CD8-positive, alpha-beta T cell (primary cell): ENCODE measurements at regions of chr5 and their contacts with region 1.

Region 1: GRCh38 chr5:65481635-65482295 is at the start of gene ADAMTS6:
- DNase-seq: peak; percentile 47 to 91 (median 80)
- ATAC-seq: peak; percentile 90
- H3K4me3 ChIP-seq: peak within 1 kb of the TSS; percentile 71 to 80
- H3K4me3 Mint-ChIP-seq: peak within 1 kb of the TSS; percentile 88
- H3K27ac ChIP-seq: peak within 1 kb of the TSS; percentile 64 to 74
- H3K27ac Mint-ChIP-seq: peak within 1 kb of the TSS; percentile 94
- H3K4me1 ChIP-seq: peaks cover 11% of the 10 kb centered on the region
- H3K4me1 Mint-ChIP-seq: peaks cover 16% of the 10 kb centered on the region
- H3K27me3 ChIP-seq: no peaks in the 10 kb centered on the region
- H3K27me3 Mint-ChIP-seq: no peaks in the 10 kb centered on the region
- CTCF ChIP-seq: no peak
- total RNA-seq, gene ADAMTS6: 4.0 to 4.3 TPM

Region 2: DNA sequence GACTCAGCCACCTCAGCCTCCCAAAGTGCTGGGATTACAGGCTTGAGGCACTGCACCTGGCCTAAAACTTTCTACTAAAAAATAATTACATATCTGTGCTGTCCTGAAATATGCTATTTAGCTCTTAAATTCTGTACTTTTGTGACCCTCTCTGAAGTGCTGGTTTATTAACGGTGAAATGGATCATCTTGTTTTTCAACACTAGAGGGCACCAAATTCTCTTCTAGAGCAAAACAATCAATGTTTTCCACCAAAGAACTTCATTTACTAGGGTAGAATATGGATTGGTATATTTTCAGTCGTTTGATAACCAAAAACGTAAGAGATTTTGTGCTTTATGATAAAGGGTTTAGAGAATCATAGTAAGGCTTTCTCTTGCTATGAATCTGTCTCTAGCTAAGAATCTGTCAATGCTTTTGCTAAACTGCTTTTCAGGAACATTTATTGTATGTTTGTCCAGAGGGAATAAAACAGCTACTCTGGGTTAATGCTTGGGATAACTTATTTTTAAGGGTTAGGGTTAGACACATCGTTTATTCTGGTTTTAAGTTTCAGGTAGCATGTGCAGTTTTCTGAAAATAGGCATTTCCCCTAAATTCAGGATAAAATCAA is 1252.5 kb before region 1 on chr5:
- CTCF ChIA-PET with region 1: no interaction called
- POLR2A ChIA-PET with region 1: no interaction called
- intact Hi-C with region 1: loop called in 1 of 2 experiments (anchors 5 kb)
- DNase-seq: peak in 1 of 9 experiments; percentile 9
- ATAC-seq: no peak
- H3K4me3 ChIP-seq: no peak overlapping the region
- H3K4me3 Mint-ChIP-seq: no peak overlapping the region
- H3K27ac ChIP-seq: no peak overlapping the region
- H3K27ac Mint-ChIP-seq: no peak overlapping the region
- H3K4me1 ChIP-seq: no peaks in the 10 kb centered on the region
- H3K4me1 Mint-ChIP-seq: no peaks in the 10 kb centered on the region
- H3K27me3 ChIP-seq: no peaks in the 10 kb centered on the region
- H3K27me3 Mint-ChIP-seq: no peaks in the 10 kb centered on the region
- CTCF ChIP-seq: peak; percentile 38

Region 3: DNA sequence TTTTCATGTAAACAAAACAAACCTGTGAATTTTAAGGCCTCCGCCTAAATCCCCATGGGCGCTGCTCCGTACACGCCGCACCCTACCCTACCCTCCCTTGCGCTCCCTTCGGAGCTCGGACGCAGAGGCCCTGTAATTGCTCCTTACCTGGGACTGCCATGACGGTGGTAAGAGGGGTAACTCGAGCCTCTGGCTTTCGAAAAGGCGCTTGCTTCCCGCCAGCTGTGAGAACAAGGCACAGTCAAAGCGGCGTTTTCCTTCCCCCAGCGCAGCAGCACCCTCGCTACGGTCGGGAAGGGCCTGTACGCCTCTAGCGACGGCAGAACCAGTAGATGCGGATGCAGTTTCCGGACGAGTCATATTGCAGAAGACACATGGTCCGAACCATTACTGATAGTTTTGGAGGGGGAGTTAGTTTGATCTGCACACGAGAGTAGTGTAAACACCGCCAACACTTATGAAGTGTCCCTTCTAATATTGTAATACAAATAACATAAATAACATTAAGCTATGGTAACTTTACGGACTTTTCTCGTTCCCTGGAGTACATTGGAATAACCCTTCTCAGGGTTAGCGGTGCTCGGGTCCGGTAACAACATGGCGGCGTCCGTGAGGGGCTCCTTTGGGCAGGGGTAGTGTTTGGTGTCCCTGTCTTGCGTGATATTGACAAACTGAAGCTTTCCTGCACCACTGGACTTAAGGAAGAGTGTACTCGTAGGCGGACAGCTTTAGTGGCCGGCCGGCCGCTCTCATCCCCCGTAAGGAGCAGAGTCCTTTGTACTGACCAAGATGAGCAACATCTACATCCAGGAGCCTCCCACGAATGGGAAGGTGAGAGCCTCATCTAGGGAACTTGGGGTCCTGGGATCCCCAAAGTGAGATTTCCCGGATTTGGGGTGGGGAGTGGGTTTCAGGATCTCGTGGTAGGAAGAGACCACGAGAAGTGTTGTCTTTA is 713.1 kb before region 1 on chr5 and contains the starts of genes CWC27 and SREK1IP1:
- CTCF ChIA-PET with region 1: no interaction called
- POLR2A ChIA-PET with region 1: no interaction called
- intact Hi-C with region 1: loop called in 1 of 2 experiments (anchors 1 kb)
- DNase-seq: peak; percentile 63 to 92 (median 80)
- ATAC-seq: peak; percentile 96
- H3K4me3 ChIP-seq: peak within 1 kb of the TSS; percentile 78 to 93
- H3K4me3 Mint-ChIP-seq: peak within 1 kb of the TSS; percentile 100
- H3K27ac ChIP-seq: peak within 1 kb of the TSS; percentile 85 to 90
- H3K27ac Mint-ChIP-seq: peak within 1 kb of the TSS; percentile 97
- H3K4me1 ChIP-seq: peaks cover 39% of the 10 kb centered on the region
- H3K4me1 Mint-ChIP-seq: peaks cover 66% of the 10 kb centered on the region
- H3K27me3 ChIP-seq: no peaks in the 10 kb centered on the region
- H3K27me3 Mint-ChIP-seq: no peaks in the 10 kb centered on the region
- CTCF ChIP-seq: no peak
- total RNA-seq, gene CWC27: 15.5 to 16.6 TPM
- total RNA-seq, gene SREK1IP1: 20.4 to 26.5 TPM

Region 4: GRCh38 chr5:64811050-64811640 is 670.6 kb before region 1 on chr5:
- CTCF ChIA-PET with region 1: interaction called, 29 read pairs
- POLR2A ChIA-PET with region 1: no interaction called
- intact Hi-C with region 1: loop called (anchors 1 kb)
- DNase-seq: peak in 3 of 9 experiments; percentile 4 to 63 (median 52)
- ATAC-seq: no peak
- H3K4me3 ChIP-seq: no peak overlapping the region
- H3K4me3 Mint-ChIP-seq: no peak overlapping the region
- H3K27ac ChIP-seq: no peak overlapping the region
- H3K27ac Mint-ChIP-seq: no peak overlapping the region
- H3K4me1 ChIP-seq: no peaks in the 10 kb centered on the region
- H3K4me1 Mint-ChIP-seq: no peaks in the 10 kb centered on the region
- H3K27me3 ChIP-seq: no peaks in the 10 kb centered on the region
- H3K27me3 Mint-ChIP-seq: no peaks in the 10 kb centered on the region
- CTCF ChIP-seq: peak; percentile 65

Region 5: GRCh38 chr5:65035211-65036206 is 446.3 kb before region 1 on chr5:
- CTCF ChIA-PET with region 1: no interaction called
- POLR2A ChIA-PET with region 1: interaction called, 7 read pairs
- intact Hi-C with region 1: loop called (anchors 1 to 2 kb)
- DNase-seq: peak; percentile 62 to 95 (median 83)
- ATAC-seq: peak; percentile 76
- H3K4me3 ChIP-seq: peak overlapping the region; percentile 57 to 60
- H3K4me3 Mint-ChIP-seq: peak overlapping the region; percentile 95
- H3K27ac ChIP-seq: peak overlapping the region; percentile 83 to 96
- H3K27ac Mint-ChIP-seq: peak overlapping the region; percentile 89
- H3K4me1 ChIP-seq: peaks cover 20% of the 10 kb centered on the region
- H3K4me1 Mint-ChIP-seq: peaks cover 32% of the 10 kb centered on the region
- H3K27me3 ChIP-seq: no peaks in the 10 kb centered on the region
- H3K27me3 Mint-ChIP-seq: no peaks in the 10 kb centered on the region
- CTCF ChIP-seq: no peak

Region 6: DNA sequence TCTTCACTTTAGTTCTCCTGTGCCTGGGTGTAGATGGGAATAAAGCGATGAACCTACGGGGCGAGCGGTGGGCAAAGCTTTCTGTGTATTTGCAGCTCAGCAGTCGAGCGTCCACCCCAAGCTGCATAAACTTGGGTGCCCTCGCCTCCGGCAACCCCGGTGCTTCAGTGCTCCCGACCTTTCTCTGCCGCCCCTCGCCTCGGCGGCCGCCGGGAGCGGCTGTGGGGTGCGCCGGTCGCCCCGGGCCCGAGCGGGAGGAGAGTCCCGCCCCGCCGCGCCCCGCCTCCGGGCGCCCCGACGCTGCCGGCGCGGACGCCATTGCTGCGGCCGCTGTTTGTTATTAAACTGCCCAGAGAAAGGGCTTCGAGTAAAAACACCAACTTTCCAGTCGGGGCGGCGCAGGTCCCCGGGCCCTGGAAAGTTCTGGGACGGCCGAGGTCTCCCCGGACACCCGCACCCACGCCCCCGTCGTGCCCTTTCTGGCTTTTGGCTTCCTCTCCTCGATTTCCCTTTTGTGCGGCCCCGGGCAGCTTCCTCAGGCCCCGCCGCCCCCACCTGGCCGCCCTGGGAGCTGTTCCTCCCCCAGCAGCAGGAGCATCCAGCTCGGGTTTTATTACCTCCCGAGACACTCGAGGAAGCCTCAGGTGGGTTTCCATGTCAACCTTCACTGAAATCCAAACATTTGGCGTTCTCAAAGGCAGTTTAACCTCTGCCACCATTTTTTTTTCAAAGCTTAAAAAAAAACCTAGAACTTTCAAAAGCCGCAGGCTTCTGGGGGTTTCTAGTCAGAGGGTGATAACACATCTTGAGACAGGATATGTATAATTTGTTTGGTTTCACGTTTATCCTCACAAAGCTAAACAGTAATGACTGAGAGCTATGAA is 378.7 kb before region 1 on chr5:
- CTCF ChIA-PET with region 1: interaction called, 12 read pairs
- POLR2A ChIA-PET with region 1: interaction called, 9 read pairs
- intact Hi-C with region 1: loop called (anchors 1 to 2 kb)
- DNase-seq: peak; percentile 26 to 85 (median 59)
- ATAC-seq: peak; percentile 75
- H3K4me3 ChIP-seq: peak overlapping the region; percentile 64 to 78
- H3K4me3 Mint-ChIP-seq: peak overlapping the region; percentile 88
- H3K27ac ChIP-seq: peak overlapping the region; percentile 77 to 83
- H3K27ac Mint-ChIP-seq: peak overlapping the region; percentile 95
- H3K4me1 ChIP-seq: peaks cover 24% of the 10 kb centered on the region
- H3K4me1 Mint-ChIP-seq: peaks cover 43% of the 10 kb centered on the region
- H3K27me3 ChIP-seq: no peaks in the 10 kb centered on the region
- H3K27me3 Mint-ChIP-seq: no peaks in the 10 kb centered on the region
- CTCF ChIP-seq: no peak

Region 7: GRCh38 chr5:65624571-65625555 is 143.1 kb after region 1 on chr5 and contains the starts of genes SHLD3 and TRAPPC13:
- CTCF ChIA-PET with region 1: no interaction called
- POLR2A ChIA-PET with region 1: no interaction called
- intact Hi-C with region 1: loop called in 1 of 2 experiments (anchors 5 kb)
- DNase-seq: peak; percentile 70 to 96 (median 83)
- ATAC-seq: peak; percentile 72
- H3K4me3 ChIP-seq: peak within 1 kb of the TSS; percentile 80 to 84
- H3K4me3 Mint-ChIP-seq: peak within 1 kb of the TSS; percentile 97
- H3K27ac ChIP-seq: peak within 1 kb of the TSS; percentile 78 to 91
- H3K27ac Mint-ChIP-seq: peak within 1 kb of the TSS; percentile 99
- H3K4me1 ChIP-seq: peaks cover 26% of the 10 kb centered on the region
- H3K4me1 Mint-ChIP-seq: peaks cover 56% of the 10 kb centered on the region
- H3K27me3 ChIP-seq: no peaks in the 10 kb centered on the region
- H3K27me3 Mint-ChIP-seq: no peaks in the 10 kb centered on the region
- CTCF ChIP-seq: no peak
- total RNA-seq, gene SHLD3: 11.6 to 14.5 TPM
- total RNA-seq, gene TRAPPC13: 11.9 to 17.6 TPM